Naive thymus-derived CD4-positive, alpha-beta T cell (primary cell): ENCODE measurements at regions of chr1 and their contacts with region 1.

Region 1: DNA sequence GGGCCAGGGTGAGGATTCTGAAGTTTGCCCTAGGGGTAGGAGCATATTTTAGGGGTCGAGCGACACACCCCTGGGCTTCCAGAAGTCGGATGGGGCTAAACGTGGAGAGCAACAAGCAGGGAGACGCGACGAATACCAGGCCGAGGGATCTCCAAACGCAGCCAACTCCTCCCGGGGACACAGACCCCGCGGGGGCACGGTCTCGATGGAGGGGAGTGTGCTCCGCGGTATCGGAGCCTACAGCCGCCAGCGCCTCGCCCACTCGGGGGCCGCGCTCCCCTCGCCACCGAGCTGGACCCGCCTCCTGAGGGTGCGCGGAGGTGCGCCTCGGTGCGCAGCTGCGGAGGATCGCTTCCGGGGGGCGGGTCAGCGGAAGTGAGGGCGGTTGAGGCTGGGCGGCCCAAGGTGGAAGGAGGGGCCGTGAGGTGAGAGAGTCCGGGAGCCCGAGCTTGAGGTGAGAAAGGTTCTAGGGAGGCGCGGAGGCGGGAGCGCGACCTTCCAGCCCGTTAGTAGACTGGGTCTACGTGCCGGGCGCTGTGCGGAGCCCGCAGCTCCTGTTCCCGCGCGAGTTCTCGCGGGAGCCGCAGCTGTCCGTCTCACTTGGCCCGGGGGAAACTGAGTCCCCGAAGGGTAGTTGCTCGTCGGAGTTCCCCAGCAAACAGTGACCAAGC is at the start of gene MTFR1L:
- DNase-seq: peak; percentile 82 to 96 (median 92)
- ATAC-seq: peak; percentile 92
- H3K4me3 ChIP-seq: peak within 1 kb of the TSS; percentile 97
- H3K4me3 Mint-ChIP-seq: peak within 1 kb of the TSS; percentile 91 to 100 (median 96)
- H3K27ac ChIP-seq: peak within 1 kb of the TSS; percentile 91
- H3K27ac Mint-ChIP-seq: peak within 1 kb of the TSS; percentile 92 to 99 (median 96)
- H3K4me1 ChIP-seq: peaks cover 19 to 28% of the 10 kb centered on the region in 2 donors
- H3K4me1 Mint-ChIP-seq: peaks cover 30 to 61% (median 46%) of the 10 kb centered on the region in 7 donors
- H3K27me3 ChIP-seq: no peaks in the 10 kb centered on the region
- H3K27me3 Mint-ChIP-seq: no peaks in the 10 kb centered on the region
- total RNA-seq, gene MTFR1L: 39.6 to 60.2 (median 42.3) TPM

Region 2: DNA sequence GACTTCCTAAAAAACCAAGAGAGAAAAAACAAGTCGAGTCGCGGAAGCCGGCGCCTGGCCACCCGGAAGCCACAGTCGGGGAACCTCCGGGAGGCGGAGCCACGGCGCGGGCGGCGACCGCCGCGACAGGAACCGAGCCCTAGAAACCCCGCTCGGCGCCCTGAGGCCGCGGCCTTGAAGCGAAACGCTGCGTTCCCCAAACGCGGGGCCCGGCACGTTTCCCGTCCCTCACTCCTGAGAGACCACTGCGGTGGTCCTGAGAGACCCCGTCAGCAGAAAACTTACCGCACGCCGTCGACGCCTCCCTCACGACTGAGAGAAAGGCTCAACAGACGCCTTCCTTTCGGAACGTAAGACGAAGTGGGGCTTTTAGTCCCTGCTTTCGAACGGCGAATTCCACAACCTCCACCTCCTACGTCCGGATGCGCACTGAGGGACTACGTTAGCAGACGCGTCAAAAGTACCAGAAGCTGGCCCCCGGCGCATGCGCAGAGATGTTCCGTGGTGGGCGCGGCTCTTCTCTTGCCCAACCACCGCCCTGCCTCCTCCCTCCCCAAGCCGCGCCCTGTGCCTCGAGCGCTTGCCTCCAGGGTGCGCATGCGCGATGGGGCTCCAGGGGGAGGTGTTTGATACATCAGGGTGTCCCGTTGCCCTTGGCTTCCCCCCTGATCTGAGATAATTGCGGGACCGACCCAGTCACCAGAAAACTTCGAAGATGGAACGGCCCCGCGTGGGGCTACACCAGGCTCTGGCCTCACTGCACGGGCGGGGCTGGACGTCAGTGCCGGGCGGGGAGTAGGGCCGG is 572.5 kb before region 1 on chr1 and contains the start of gene RSRP1:
- CTCF ChIA-PET with region 1: no interaction called
- POLR2A ChIA-PET with region 1: no interaction called
- intact Hi-C with region 1: loop called (anchors 2 to 10 kb)
- DNase-seq: peak; percentile 99 to 100 (median 99)
- ATAC-seq: peak; percentile 91
- H3K4me3 ChIP-seq: peak within 1 kb of the TSS; percentile 94
- H3K4me3 Mint-ChIP-seq: peak within 1 kb of the TSS; percentile 96 to 99 (median 97)
- H3K27ac ChIP-seq: peak within 1 kb of the TSS; percentile 98
- H3K27ac Mint-ChIP-seq: peak within 1 kb of the TSS; percentile 98 to 100 (median 100)
- H3K4me1 ChIP-seq: peaks cover 30 to 35% of the 10 kb centered on the region in 2 donors
- H3K4me1 Mint-ChIP-seq: peaks cover 28 to 65% (median 51%) of the 10 kb centered on the region in 7 donors
- H3K27me3 ChIP-seq: no peaks in the 10 kb centered on the region
- H3K27me3 Mint-ChIP-seq: peaks cover 0 to 8% (median 0%) of the 10 kb centered on the region in 5 donors
- total RNA-seq, gene RSRP1: 230 to 449 (median 425) TPM

Region 3: DNA sequence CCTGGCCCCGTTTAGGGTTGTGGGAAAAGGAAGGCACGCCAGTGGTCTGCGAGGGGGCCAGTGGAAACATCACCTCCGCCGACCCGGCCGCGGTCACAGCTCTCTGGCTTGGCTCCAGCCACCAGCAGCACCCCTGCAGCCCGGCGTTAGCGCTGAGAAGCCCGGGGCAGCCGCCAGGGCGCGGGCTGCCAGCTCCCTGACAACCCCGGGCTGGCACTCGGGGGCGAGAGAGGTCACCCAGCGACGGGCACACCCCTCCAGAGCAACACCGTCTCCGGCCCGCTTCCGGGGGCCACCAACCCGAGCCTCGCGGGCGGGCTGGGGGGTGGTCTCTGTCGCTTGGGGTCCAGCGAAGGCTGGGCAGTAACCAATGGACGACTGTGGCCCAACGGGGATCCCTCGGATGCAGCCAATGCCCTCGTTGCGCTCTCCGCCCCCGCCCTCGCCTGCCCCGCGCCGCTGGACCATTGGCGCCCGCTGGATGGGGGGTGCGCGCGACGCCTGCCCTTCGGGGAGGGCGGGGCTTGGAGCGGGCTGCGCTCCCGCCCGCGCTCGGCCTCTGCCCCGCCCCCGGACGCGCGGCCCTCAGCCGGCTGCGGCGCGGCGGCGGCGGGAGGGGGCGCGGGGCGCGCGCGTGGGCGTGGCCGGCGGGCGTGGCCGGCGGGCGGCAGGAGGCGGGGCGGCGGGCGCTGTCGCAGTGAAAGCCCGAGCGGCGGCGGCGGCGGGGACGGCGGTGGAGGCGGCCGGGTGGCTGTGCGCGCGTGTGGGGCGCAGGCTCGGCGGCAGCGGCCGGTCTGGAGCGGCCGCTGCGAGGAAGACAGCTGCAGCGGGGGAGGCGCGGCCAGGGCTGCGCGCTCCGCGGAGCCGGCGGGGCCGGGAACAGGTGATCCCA is 203.4 kb before region 1 on chr1 and contains the start of gene MAN1C1:
- CTCF ChIA-PET with region 1: interaction called, 3 read pairs
- POLR2A ChIA-PET with region 1: interaction called, 10 read pairs
- intact Hi-C with region 1: no loop called
- DNase-seq: peak; percentile 71 to 89 (median 85)
- ATAC-seq: peak; percentile 91
- H3K4me3 ChIP-seq: peak within 1 kb of the TSS; percentile 76
- H3K4me3 Mint-ChIP-seq: peak within 1 kb of the TSS; percentile 78 to 99 (median 86)
- H3K27ac ChIP-seq: peak within 1 kb of the TSS; percentile 84
- H3K27ac Mint-ChIP-seq: peak within 1 kb of the TSS; percentile 67 to 93 (median 86)
- H3K4me1 ChIP-seq: peaks cover 13 to 37% of the 10 kb centered on the region in 2 donors
- H3K4me1 Mint-ChIP-seq: peaks cover 36 to 52% (median 45%) of the 10 kb centered on the region in 7 donors
- H3K27me3 ChIP-seq: no peaks in the 10 kb centered on the region
- H3K27me3 Mint-ChIP-seq: peaks cover 0 to 72% (median 0%) of the 10 kb centered on the region in 5 donors
- total RNA-seq, gene MAN1C1: 28.8 to 85.5 (median 69.9) TPM

Region 4: DNA sequence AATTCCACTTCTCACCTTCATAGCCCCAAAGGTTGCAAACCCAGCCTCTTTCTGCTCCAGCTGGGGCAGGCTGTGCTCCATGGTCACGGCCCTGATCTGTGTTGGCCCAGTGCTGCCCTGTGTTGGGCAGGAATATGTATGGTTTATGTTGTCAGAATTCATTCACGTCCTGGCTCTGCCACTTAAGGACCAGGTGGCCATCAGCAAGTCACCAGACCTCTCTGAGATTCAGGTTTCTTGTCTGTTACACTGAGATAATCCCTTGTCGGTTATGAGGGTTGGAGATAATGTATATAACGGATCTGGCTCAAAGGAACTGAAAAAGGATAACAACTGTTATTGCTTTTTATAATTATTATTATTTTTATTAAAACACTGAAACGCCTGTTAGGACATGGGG is 58.8 kb before region 1 on chr1:
- CTCF ChIA-PET with region 1: no interaction called
- POLR2A ChIA-PET with region 1: no interaction called
- intact Hi-C with region 1: no loop called
- DNase-seq: no peak
- ATAC-seq: no peak
- H3K4me3 ChIP-seq: no peak overlapping the region
- H3K4me3 Mint-ChIP-seq: no peak overlapping the region
- H3K27ac ChIP-seq: no peak overlapping the region
- H3K27ac Mint-ChIP-seq: peak overlapping the region in 8 of 9 donors; percentile 66 to 88 (median 80)
- H3K4me1 ChIP-seq: peaks cover 0 to 19% of the 10 kb centered on the region in 2 donors
- H3K4me1 Mint-ChIP-seq: peaks cover 5 to 45% (median 34%) of the 10 kb centered on the region in 7 donors
- H3K27me3 ChIP-seq: no peaks in the 10 kb centered on the region
- H3K27me3 Mint-ChIP-seq: peaks cover 0 to 16% (median 0%) of the 10 kb centered on the region in 5 donors

Region 5: GRCh38 chr1:25796811-25797458 is 22.8 kb before region 1 on chr1:
- CTCF ChIA-PET with region 1: interaction called, 4 read pairs
- POLR2A ChIA-PET with region 1: interaction called, 25 read pairs
- intact Hi-C with region 1: loop called in 1 of 2 experiments (anchors 1 kb)
- DNase-seq: peak; percentile 71 to 89 (median 86)
- ATAC-seq: peak; percentile 76
- H3K4me3 ChIP-seq: peak overlapping the region; percentile 15
- H3K4me3 Mint-ChIP-seq: peak overlapping the region; percentile 58 to 94 (median 81)
- H3K27ac ChIP-seq: peak overlapping the region; percentile 37
- H3K27ac Mint-ChIP-seq: peak overlapping the region; percentile 51 to 98 (median 93)
- H3K4me1 ChIP-seq: peaks cover 32 to 67% of the 10 kb centered on the region in 2 donors
- H3K4me1 Mint-ChIP-seq: peaks cover 30 to 88% (median 74%) of the 10 kb centered on the region in 7 donors
- H3K27me3 ChIP-seq: no peaks in the 10 kb centered on the region
- H3K27me3 Mint-ChIP-seq: peaks cover 0 to 29% (median 0%) of the 10 kb centered on the region in 5 donors

Region 6: DNA sequence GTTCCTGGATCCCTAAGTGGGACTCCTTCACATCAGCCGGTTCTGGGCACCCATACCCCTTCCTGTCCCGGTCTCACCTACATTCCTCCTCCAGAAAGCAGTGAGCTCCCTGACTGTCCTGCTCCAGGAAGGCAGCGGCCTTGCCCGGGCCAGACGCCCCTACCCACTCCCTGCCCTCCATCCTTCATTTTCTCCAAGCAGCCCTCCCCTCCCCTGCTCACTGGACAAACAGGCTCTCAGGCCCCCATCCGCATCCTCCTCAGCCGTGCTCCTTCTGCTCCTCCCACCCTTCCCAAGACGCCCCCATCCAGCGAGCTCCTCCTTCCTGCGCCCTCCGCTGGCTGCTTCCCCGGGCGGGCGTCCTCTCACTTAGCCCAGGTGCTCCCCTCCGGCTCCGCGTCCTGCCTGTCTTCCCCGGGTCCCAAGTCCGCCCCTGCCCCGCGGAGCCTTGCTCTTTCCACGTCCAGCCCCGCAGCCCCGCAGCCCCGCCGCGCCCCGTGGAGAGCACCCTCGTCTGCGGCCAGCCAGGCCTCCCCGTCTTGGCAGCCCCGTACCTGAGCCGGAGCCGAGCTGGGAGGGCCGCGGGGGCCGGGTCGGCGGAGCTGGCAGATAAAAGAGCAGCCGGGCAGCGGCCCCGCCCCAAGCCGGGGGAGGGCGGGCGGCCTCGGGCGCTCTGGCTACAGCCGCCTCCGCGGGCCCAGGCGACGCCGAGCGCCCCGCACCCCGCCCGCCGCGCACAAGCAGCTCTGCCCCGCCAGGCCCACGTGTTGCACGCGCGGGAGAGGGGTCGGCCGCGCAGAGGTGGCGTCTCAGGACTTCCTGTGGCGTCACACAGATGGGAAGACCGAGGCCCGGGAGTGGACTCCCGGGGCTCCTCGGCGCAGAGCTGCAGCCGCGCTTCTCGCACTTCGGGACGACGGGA is 55.5 kb after region 1 on chr1 and contains the start of gene PAQR7:
- CTCF ChIA-PET with region 1: no interaction called
- POLR2A ChIA-PET with region 1: interaction called, 19 read pairs
- intact Hi-C with region 1: loop called in 1 of 2 experiments (anchors 1 kb)
- DNase-seq: peak; percentile 47 to 74 (median 53)
- ATAC-seq: peak; percentile 89
- H3K4me3 ChIP-seq: peak within 1 kb of the TSS; percentile 64
- H3K4me3 Mint-ChIP-seq: peak within 1 kb of the TSS; percentile 75 to 91 (median 86)
- H3K27ac ChIP-seq: peak within 1 kb of the TSS; percentile 56
- H3K27ac Mint-ChIP-seq: peak within 1 kb of the TSS; percentile 54 to 89 (median 81)
- H3K4me1 ChIP-seq: peaks cover 9 to 11% of the 10 kb centered on the region in 2 donors
- H3K4me1 Mint-ChIP-seq: peaks cover 0 to 16% (median 7%) of the 10 kb centered on the region in 7 donors
- H3K27me3 ChIP-seq: no peaks in the 10 kb centered on the region
- H3K27me3 Mint-ChIP-seq: peaks cover 0 to 23% (median 0%) of the 10 kb centered on the region in 5 donors
- total RNA-seq, gene PAQR7: 3.4 to 6.0 (median 4.0) TPM

Region 7: DNA sequence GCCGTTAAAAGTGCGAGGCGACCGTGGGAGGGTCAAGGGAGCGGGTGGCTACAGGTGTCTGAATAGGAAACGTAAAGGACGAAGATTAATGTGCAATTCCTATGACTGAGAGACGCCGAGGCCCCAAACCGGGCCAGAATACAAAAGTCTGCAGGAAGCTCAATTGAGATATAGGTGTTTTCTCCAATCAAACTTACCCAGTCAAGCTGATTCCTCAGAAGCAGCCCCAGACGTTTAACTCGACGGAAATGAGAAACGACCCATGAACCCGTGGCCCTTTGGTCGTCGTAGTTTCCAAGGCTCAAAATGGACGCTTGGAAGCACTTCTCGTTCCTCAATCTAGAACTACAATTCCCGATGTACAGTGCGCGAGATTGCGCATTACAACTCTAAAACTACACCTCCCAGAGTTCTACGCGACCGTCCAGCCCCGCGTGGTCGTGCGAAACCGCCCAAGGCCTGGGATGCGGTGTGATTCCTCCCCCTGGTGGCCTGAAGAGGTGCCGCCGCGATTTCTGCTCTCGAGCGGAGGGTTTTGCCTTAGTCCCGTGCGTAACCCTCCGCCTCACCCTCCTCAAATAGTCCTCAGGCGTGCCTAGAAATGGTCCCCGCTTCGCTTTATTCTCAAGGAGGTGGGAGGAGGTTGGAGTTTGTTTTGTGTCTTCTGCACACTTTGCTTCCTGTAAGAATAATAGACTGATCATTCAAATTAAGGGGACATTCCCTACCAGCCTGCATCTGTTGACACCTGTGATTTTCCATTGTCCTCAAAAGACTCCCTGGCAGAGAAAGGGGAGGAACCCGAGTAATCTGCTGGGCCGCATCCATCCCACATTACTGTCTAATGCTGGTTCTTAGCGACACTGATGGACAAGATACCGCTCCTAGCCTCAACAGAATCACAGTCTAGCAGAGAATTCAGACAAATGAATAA is 178.4 kb after region 1 on chr1 and contains the start of gene PAFAH2:
- CTCF ChIA-PET with region 1: interaction called, 3 read pairs
- POLR2A ChIA-PET with region 1: interaction called, 20 read pairs
- intact Hi-C with region 1: loop called (anchors 1 kb)
- DNase-seq: peak; percentile 83 to 99 (median 98)
- ATAC-seq: peak; percentile 98
- H3K4me3 ChIP-seq: peak within 1 kb of the TSS; percentile 76
- H3K4me3 Mint-ChIP-seq: peak within 1 kb of the TSS; percentile 91 to 99 (median 96)
- H3K27ac ChIP-seq: peak within 1 kb of the TSS; percentile 89
- H3K27ac Mint-ChIP-seq: peak within 1 kb of the TSS; percentile 96 to 99 (median 99)
- H3K4me1 ChIP-seq: peaks cover 8 to 18% of the 10 kb centered on the region in 2 donors
- H3K4me1 Mint-ChIP-seq: peaks cover 19 to 50% (median 40%) of the 10 kb centered on the region in 7 donors
- H3K27me3 ChIP-seq: no peaks in the 10 kb centered on the region
- H3K27me3 Mint-ChIP-seq: no peaks in the 10 kb centered on the region
- total RNA-seq, gene PAFAH2: 11.4 to 36.0 (median 12.7) TPM